ENCODE measurements at regions of chr22 and their contacts with region 1.

Region 1: GRCh38 chr22:36180038-36180880 is 19.7 kb upstream of the APOL3 start:
- DNase-seq: peak; percentile 85 to 89
- H3K4me3 ChIP-seq: no peak overlapping the region
- H3K27ac ChIP-seq: no peak overlapping the region
- H3K4me1 ChIP-seq: peaks cover 0 to 3% of the 10 kb centered on the region in 2 donors
- H3K27me3 ChIP-seq: no peaks in the 10 kb centered on the region
- CTCF ChIP-seq: peak; percentile 79 to 92 (median 90)
- POLR2A ChIP-seq: peak in 1 of 2 donors; percentile 21

Region 2: GRCh38 chr22:35547993-35548721 is 632.1 kb before region 1 on chr22:
- intact Hi-C with region 1: no loop called
- DNase-seq: no peak
- H3K4me3 ChIP-seq: no peak overlapping the region
- H3K27ac ChIP-seq: no peak overlapping the region
- H3K4me1 ChIP-seq: no peaks in the 10 kb centered on the region
- H3K27me3 ChIP-seq: no peaks in the 10 kb centered on the region
- CTCF ChIP-seq: no peak
- POLR2A ChIP-seq: no peak

Region 3: GRCh38 chr22:35995772-35996171 is 184.5 kb before region 1 on chr22:
- intact Hi-C with region 1: no loop called
- DNase-seq: peak; percentile 91 to 93
- H3K4me3 ChIP-seq: no peak overlapping the region
- H3K27ac ChIP-seq: peak overlapping the region; percentile 86 to 94
- H3K4me1 ChIP-seq: peaks cover 6 to 22% of the 10 kb centered on the region in 2 donors
- H3K27me3 ChIP-seq: no peaks in the 10 kb centered on the region
- CTCF ChIP-seq: no peak
- POLR2A ChIP-seq: no peak

Region 4: GRCh38 chr22:36123673-36124630 is 56.3 kb before region 1 on chr22:
- intact Hi-C with region 1: no loop called
- DNase-seq: peak; percentile 94 to 95
- H3K4me3 ChIP-seq: peak overlapping the region in 1 of 2 donors; percentile 18
- H3K27ac ChIP-seq: peak overlapping the region; percentile 79 to 85
- H3K4me1 ChIP-seq: no peaks in the 10 kb centered on the region
- H3K27me3 ChIP-seq: no peaks in the 10 kb centered on the region
- CTCF ChIP-seq: peak; percentile 98 to 100 (median 99)
- POLR2A ChIP-seq: peak; percentile 50 to 52

Region 5: DNA sequence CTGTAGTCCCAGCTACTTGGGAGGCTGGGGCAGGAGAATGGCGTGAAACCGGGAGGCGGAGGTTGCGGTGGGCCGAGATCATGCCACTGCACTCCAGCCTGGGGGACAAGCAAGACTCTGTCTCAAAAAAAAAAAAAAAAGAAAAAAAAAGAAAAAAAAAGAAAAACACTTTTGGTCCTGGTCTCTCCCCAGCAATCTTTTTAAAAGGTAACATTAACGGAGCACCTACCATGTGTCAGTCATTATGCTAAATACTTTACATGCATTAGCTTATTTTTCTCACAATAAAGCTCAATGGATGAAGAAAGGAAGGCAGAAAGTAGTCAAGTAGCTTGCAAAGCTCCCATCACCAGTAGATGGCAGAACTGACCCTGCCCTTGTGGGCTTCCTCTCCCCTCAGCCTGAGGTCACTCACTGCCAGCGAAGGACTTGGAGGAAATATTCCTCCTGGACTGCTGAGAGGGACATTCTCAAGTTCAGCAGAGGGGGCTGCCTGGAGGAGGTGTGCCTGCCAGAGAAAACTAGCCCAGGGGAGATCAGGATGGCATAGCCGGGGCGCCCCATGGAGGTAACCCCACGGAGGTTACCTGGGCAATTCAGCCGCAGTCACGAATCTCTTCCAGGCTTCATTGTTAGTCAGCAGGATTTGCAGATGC is 35.2 kb before region 1 on chr22:
- intact Hi-C with region 1: loop called (anchors 2 kb)
- DNase-seq: peak; percentile 66 to 76
- H3K4me3 ChIP-seq: no peak overlapping the region
- H3K27ac ChIP-seq: peak overlapping the region; percentile 28 to 40
- H3K4me1 ChIP-seq: no peaks in the 10 kb centered on the region
- H3K27me3 ChIP-seq: no peaks in the 10 kb centered on the region
- CTCF ChIP-seq: peak; percentile 76 to 85 (median 79)
- POLR2A ChIP-seq: no peak

Region 6: GRCh38 chr22:36470162-36470993 is 290.1 kb after region 1 on chr22:
- intact Hi-C with region 1: no loop called
- DNase-seq: peak; percentile 83 to 90
- H3K4me3 ChIP-seq: no peak overlapping the region
- H3K27ac ChIP-seq: peak overlapping the region; percentile 96 to 97
- H3K4me1 ChIP-seq: peaks cover 4 to 9% of the 10 kb centered on the region in 2 donors
- H3K27me3 ChIP-seq: no peaks in the 10 kb centered on the region
- CTCF ChIP-seq: peak; percentile 97
- POLR2A ChIP-seq: no peak

Measured in uterus (tissue), 4 donors.